ENCODE measurements at regions of chr16 and their contacts with region 1.

Region 1: DNA sequence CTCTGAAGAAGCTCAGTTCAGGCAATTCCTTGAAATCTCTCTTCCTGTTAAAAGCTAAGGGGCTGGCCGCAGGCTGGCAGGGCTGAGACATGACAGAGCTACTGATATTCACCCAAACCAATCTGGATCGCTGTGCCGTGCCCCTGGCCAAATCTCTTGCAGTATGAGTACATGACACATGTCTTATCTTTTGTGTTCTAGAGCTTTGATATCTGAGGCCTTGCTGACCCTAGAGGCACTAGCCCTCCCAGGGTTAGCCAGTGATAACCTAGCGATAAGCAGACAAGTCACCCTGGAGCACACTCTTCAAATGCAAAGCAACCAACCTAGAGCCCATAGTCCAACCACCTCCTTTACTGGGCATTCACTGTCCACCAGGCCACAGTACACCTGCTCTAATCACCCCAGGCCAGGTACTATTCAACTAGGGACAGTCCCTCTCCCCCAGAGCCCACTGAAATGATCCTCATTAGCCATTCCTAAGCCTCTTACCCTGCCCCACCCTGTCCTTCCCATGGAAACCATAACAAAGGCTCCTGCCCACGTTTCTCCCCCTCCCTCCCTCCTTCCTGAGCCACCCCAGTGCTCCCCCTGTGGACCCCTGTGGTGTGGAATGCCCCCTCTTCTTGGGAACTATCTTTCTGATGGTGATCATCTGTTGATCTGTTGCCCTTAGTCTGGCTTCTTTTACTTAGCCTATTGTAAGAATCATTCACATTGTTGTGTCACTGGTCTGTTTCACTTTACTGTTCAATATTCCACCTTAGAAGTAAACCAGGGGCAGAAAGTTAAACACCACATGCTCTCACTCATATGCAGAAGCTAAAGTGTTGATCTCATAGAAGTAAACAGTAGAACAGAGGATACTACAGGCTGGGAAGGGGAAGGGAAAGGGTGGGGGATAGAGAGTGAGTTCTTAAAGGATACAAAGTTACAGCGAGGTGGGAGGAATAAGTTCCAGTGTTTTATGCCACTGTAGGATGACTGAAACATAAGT is 52.5 kb downstream of the TEKT5 start:
- DNase-seq: no peak
- H3K4me3 ChIP-seq: no peak overlapping the region
- H3K4me3 Mint-ChIP-seq: no peak overlapping the region
- H3K27ac ChIP-seq: no peak overlapping the region
- H3K27ac Mint-ChIP-seq: peak overlapping the region in 2 of 7 donors; percentile 11 to 61
- H3K4me1 ChIP-seq: peaks cover 9 to 21% of the 10 kb centered on the region in 2 donors
- H3K4me1 Mint-ChIP-seq: peaks cover 15% of the 10 kb centered on the region
- H3K27me3 ChIP-seq: no peaks in the 10 kb centered on the region
- H3K27me3 Mint-ChIP-seq: peaks cover 2 to 5% (median 3%) of the 10 kb centered on the region in 3 donors
- CTCF ChIP-seq: no peak

Region 2: GRCh38 chr16:10521681-10522274 is 120.5 kb before region 1 on chr16:
- intact Hi-C with region 1: loop called in 1 of 2 experiments (anchors 10 kb)
- DNase-seq: peak; percentile 46 to 67 (median 56)
- H3K4me3 ChIP-seq: no peak overlapping the region
- H3K4me3 Mint-ChIP-seq: no peak overlapping the region
- H3K27ac ChIP-seq: no peak overlapping the region
- H3K27ac Mint-ChIP-seq: no peak overlapping the region
- H3K4me1 ChIP-seq: no peaks in the 10 kb centered on the region
- H3K4me1 Mint-ChIP-seq: peaks cover 6% of the 10 kb centered on the region
- H3K27me3 ChIP-seq: no peaks in the 10 kb centered on the region
- H3K27me3 Mint-ChIP-seq: peaks cover 0 to 1% (median 1%) of the 10 kb centered on the region in 3 donors
- CTCF ChIP-seq: peak; percentile 80

Region 3: DNA sequence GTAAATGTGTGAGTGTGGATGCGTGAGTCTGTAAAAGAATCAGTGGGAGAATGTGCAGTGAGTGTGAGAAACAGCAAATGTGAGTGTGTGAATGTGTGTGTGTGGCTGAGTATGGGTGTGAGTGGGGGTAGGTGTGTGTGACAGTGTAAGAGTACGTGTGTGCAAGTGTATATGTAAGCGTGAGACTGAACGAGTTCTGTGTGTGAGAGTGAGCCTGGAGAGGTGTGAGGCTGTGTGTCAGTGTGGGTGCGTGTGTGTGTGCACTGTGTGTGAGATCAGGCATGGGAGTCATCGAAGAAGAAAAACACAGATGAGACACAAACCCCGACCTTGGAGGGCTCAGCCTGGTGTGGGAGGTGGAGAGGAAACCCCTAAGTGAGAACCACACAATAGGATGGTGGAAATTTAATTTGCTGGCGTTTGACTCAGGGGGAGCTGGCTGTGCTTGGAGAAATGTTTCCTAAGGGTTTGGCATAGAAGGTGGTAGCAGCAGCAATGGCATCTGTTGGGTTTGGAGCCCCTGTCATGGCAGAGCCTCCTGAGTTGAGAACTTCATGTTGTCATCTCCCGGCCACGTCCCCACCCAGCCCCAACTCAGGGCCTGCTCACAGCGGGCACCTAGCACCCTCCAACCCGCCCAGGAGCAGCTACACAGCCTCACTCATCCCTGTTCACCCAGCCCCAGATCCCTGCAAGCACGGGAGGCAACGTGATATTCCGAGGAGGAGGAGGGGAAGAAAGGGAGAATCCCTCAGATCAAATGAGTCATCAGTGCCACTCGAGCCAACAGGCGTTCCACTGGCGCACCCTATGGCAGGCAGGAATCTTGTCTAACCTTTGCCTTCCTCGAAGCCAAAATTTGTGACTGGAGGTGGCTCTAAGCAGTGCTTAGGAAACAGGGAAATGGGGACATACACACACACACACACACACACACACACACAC is 87.1 kb after region 1 on chr16:
- intact Hi-C with region 1: no loop called
- DNase-seq: no peak
- H3K4me3 ChIP-seq: no peak overlapping the region
- H3K4me3 Mint-ChIP-seq: no peak overlapping the region
- H3K27ac ChIP-seq: no peak overlapping the region
- H3K27ac Mint-ChIP-seq: peak overlapping the region in 1 of 7 donors; percentile 6
- H3K4me1 ChIP-seq: no peaks in the 10 kb centered on the region
- H3K4me1 Mint-ChIP-seq: no peaks in the 10 kb centered on the region
- H3K27me3 ChIP-seq: no peaks in the 10 kb centered on the region
- H3K27me3 Mint-ChIP-seq: no peaks in the 10 kb centered on the region
- CTCF ChIP-seq: no peak